ENCODE measurements at regions of chr17 and their contacts with region 1.

Region 1: DNA sequence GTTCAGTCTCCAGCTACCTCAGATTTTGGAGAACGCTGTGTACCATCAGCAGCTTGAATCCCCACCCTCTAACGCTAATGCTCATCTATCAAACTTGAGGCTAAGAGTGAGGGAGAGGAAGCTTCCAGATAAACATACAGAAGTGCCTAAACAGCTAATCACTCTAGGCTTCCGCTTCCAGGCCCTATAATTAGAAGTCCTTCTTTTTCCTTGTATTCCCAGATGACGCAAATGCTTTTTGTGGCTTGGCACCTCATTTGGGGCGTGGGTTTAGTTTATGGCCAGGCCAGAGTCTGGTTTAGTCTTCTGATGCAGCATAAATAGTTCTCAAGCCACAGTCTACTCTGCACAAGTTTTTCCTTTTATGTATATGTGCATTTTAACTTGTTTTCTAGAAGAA is 263.4 kb downstream of the BCAS3 start:
- DNase-seq: no peak
- ATAC-seq: no peak
- H3K4me3 ChIP-seq: no peak overlapping the region
- H3K4me3 Mint-ChIP-seq: no peak overlapping the region
- H3K27ac ChIP-seq: no peak overlapping the region
- H3K27ac Mint-ChIP-seq: no peak overlapping the region
- H3K4me1 ChIP-seq: no peaks in the 10 kb centered on the region
- H3K4me1 Mint-ChIP-seq: no peaks in the 10 kb centered on the region
- H3K27me3 ChIP-seq: no peaks in the 10 kb centered on the region
- H3K27me3 Mint-ChIP-seq: no peaks in the 10 kb centered on the region
- CTCF ChIP-seq: no peak

Region 2: DNA sequence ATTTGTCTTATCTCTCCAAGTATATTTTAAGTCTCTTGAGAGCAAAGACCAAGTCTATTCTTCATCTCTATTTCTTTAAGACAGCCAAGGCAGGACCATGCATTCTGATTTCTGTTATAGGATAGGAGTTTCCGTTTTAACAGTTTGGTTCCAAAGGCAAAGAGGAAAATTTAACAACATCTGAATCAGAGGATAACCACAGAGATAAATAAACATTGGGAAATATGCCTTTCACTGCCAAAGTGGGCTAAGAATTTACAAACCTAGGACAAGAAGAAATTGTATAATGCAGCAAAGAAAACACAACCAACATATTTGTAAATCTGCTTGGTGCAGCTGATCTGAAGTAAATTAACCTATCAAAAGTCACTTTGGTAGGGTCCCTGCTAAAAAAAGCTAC is 586.8 kb before region 1 on chr17:
- CTCF ChIA-PET with region 1: no interaction called
- POLR2A ChIA-PET with region 1: no interaction called
- intact Hi-C with region 1: no loop called
- DNase-seq: no peak
- ATAC-seq: no peak
- H3K4me3 ChIP-seq: no peak overlapping the region
- H3K4me3 Mint-ChIP-seq: no peak overlapping the region
- H3K27ac ChIP-seq: no peak overlapping the region
- H3K27ac Mint-ChIP-seq: peak overlapping the region; percentile 11
- H3K4me1 ChIP-seq: peaks cover 5 to 6% of the 10 kb centered on the region in 2 donors
- H3K4me1 Mint-ChIP-seq: peaks cover 31% of the 10 kb centered on the region
- H3K27me3 ChIP-seq: no peaks in the 10 kb centered on the region
- H3K27me3 Mint-ChIP-seq: no peaks in the 10 kb centered on the region
- CTCF ChIP-seq: no peak

Region 3: GRCh38 chr17:60908335-60908734 is 32.7 kb before region 1 on chr17:
- CTCF ChIA-PET with region 1: no interaction called
- POLR2A ChIA-PET with region 1: no interaction called
- intact Hi-C with region 1: no loop called
- DNase-seq: no peak
- ATAC-seq: no peak
- H3K4me3 ChIP-seq: no peak overlapping the region
- H3K4me3 Mint-ChIP-seq: no peak overlapping the region
- H3K27ac ChIP-seq: no peak overlapping the region
- H3K27ac Mint-ChIP-seq: no peak overlapping the region
- H3K4me1 ChIP-seq: no peaks in the 10 kb centered on the region
- H3K4me1 Mint-ChIP-seq: no peaks in the 10 kb centered on the region
- H3K27me3 ChIP-seq: no peaks in the 10 kb centered on the region
- H3K27me3 Mint-ChIP-seq: no peaks in the 10 kb centered on the region
- CTCF ChIP-seq: no peak

Region 4: DNA sequence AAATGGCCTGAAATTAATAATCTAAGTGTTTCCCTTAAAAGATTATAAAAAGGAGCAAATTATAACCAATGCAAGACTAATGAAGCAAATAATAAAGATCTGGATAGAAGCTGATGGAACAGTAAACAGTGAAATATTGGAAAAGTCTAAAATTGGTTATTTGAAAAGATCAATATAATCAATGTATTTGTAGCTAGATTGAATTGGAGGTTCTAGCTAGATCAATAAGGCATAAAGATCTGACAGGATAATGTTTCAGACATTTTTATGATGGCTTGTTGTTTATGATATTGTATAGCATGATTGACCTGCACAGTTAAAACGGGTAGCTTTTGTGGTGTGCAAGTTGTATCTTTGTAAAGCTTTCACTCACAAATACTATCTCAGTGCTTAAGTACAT is 18.0 kb before region 1 on chr17:
- CTCF ChIA-PET with region 1: no interaction called
- POLR2A ChIA-PET with region 1: no interaction called
- intact Hi-C with region 1: loop called (anchors 1 kb)
- DNase-seq: no peak
- ATAC-seq: no peak
- H3K4me3 ChIP-seq: no peak overlapping the region
- H3K4me3 Mint-ChIP-seq: no peak overlapping the region
- H3K27ac ChIP-seq: no peak overlapping the region
- H3K27ac Mint-ChIP-seq: no peak overlapping the region
- H3K4me1 ChIP-seq: no peaks in the 10 kb centered on the region
- H3K4me1 Mint-ChIP-seq: no peaks in the 10 kb centered on the region
- H3K27me3 ChIP-seq: no peaks in the 10 kb centered on the region
- H3K27me3 Mint-ChIP-seq: no peaks in the 10 kb centered on the region
- CTCF ChIP-seq: no peak